Activated naive CD4-positive, alpha-beta T cell treated with anti-CD3 and anti-CD28 coated beads for 36 hours (primary cell): ENCODE measurements at regions of chr16 and their contacts with region 1.

Region 1: GRCh38 chr16:72400257-72400882 is 228.4 kb upstream of the PMFBP1 start:
- DNase-seq: peak; percentile 41
- H3K4me3 Mint-ChIP-seq: no peak overlapping the region
- H3K27ac Mint-ChIP-seq: no peak overlapping the region
- H3K4me1 Mint-ChIP-seq: no peaks in the 10 kb centered on the region
- H3K27me3 Mint-ChIP-seq: no peaks in the 10 kb centered on the region

Region 2: GRCh38 chr16:72442385-72443158 is 42.2 kb after region 1 on chr16:
- CTCF ChIA-PET with region 1: no interaction called
- intact Hi-C with region 1: no loop called
- DNase-seq: no peak
- H3K4me3 Mint-ChIP-seq: no peak overlapping the region
- H3K27ac Mint-ChIP-seq: no peak overlapping the region
- H3K4me1 Mint-ChIP-seq: no peaks in the 10 kb centered on the region
- H3K27me3 Mint-ChIP-seq: no peaks in the 10 kb centered on the region

Region 3: DNA sequence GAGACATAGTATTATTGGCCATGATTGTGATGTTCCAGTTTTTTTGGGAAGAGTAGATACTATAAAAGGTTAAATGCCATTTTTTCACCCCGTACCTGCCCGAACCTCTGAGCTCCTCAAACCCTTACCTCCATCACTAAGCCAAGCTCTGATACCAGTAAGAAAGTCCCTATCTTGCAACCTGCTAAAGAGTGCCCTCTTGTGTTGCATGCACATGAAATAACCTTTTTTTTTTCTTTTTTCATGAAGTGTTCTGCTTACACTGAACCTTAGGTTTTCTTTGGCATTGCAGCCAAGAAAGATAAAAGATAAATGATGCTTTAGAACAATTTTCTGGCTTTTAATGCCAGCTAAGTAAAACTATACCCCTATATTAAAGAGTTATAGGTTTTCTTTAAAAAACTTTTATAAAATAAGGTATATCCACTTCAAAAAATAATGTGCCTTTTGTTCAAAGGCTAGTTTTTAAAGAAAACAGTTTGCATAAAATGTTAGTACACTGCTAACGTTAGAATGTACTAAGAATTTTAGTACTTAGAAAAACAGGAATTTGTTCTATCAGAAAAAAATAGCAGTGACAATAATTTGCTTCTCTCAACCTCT is 66.9 kb after region 1 on chr16:
- CTCF ChIA-PET with region 1: no interaction called
- intact Hi-C with region 1: loop called (anchors 1 kb)
- DNase-seq: no peak
- H3K4me3 Mint-ChIP-seq: no peak overlapping the region
- H3K27ac Mint-ChIP-seq: no peak overlapping the region
- H3K4me1 Mint-ChIP-seq: no peaks in the 10 kb centered on the region
- H3K27me3 Mint-ChIP-seq: no peaks in the 10 kb centered on the region

Region 4: DNA sequence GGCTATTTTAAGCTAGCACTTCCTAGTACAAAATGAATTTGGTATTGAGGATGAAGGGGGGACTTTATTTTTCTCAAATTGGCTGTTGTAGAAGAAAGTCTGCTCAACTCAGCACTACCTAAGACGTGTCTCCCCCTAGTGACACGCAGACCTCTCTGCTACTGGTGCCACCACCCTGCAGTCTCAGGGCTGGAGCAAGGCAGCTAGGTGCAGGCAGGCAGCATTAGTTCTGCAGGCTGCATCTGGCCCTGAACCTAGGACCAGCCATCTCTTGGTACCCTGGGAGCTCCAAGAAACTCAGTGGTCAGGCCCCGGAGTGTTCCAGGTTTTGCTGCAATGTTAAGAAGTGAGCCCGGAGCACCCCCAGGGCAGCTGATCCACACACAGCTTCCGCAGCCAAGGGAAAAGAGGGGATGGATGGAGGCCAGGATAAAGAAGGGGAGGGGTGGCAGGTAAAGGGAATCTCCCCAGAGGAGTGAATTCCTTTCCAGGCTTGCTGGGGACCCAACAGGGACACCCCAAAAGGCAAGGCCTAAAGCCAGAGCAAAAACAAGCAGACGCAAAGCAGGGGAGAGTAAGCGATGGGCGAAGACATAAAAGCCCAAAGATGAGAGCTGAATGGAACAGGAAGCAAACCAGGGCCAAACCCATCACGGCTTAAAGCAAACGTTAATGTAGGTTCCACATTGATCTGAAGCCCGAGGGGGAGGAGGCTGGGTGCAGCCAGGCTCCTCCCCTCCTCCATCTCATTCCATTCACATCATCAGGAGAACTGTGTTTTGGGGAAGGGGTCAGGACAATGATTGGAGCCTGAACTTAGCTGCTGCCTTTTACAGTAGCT is 447.0 kb after region 1 on chr16:
- CTCF ChIA-PET with region 1: no interaction called
- intact Hi-C with region 1: loop called (anchors 5 kb)
- DNase-seq: peak; percentile 33
- H3K4me3 Mint-ChIP-seq: no peak overlapping the region
- H3K27ac Mint-ChIP-seq: no peak overlapping the region
- H3K4me1 Mint-ChIP-seq: peaks cover 6% of the 10 kb centered on the region
- H3K27me3 Mint-ChIP-seq: peaks cover 6% of the 10 kb centered on the region